ENCODE measurements at regions of chr2 and their contacts with region 1.

Region 1: DNA sequence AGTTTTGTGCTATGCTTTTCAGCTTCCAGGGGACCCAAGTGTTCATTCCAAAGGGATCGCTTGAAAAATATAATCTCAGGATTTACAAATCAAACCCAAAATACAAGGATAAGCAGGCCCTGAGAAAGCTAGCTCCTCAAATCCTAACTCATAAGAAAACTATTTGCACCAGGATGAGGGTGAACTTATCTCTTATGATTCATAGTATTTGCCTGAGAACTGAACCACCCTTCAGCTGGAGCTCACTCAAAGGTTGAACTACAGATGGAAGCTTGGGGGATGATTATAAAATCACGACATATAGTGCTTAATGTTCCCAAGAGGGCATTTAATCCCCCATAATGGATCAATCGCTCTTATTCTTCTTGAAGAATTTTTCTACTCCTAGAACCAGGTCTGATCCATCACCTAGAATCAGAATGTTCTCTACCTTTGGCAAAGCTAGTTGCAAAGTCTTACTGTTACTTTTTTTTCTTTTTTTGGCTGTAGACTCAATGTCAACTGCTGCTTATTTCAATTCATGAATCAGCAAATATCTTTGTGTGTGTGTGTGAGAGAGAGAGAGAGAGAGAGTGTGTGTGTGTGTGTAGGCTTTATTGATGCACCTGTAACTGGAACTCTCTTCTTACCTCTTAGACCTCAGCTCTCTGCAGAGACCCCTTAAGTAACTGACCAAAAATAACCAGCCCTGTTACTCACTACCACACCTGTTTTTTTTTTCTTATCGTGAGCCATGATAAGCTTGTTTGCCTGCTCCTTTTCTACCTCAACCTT is 44.8 kb downstream of the ARL4C start:
- DNase-seq: peak; percentile 34 to 63
- ATAC-seq: peak; percentile 71 to 85
- H3K4me3 ChIP-seq: no peak overlapping the region
- H3K27ac ChIP-seq: peak overlapping the region; percentile 50 to 70
- H3K4me1 ChIP-seq: peaks cover 33% of the 10 kb centered on the region
- CTCF ChIP-seq: no peak
- EP300 ChIP-seq: no peak
- POLR2A ChIP-seq: no peak
- RAD21 ChIP-seq: no peak

Region 2: DNA sequence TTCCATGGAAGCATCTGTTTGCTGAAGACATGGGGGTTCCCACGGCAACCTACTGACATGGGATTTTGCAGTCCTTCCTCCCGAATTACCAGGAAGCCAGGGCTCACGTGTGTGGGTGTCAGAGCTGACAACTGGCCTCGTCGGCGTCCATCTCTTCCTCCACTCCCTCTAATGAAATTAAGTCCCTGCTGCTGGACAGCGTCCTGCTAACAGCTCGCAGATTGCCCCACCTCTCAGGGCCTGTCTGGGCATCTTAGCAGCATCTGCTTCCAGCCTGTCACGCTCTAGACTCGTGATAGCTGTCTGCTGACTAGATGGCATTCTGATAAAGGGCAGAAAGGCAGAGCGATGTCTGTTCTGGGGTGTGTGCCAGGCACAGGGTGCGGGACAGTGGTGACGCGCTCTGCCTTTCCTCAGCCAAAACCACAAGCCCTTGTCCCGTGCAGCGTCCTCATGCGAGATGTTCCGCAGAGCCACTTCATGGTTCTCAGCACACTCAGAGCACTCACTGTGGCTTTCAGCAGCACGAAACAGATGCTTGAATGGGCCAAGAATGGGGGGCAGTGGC is 116.3 kb before region 1 on chr2:
- CTCF ChIA-PET with region 1: no interaction called
- POLR2A ChIA-PET with region 1: no interaction called
- DNase-seq: peak in 1 of 2 experiments; percentile 21
- ATAC-seq: peak in 1 of 2 experiments; percentile 21; a peak in 2 of 6 replicates
- H3K4me3 ChIP-seq: no peak overlapping the region
- H3K27ac ChIP-seq: peak overlapping the region in 1 of 2 experiments; percentile 67; a peak in 3 of 6 replicates
- H3K4me1 ChIP-seq: peaks cover 18% of the 10 kb centered on the region
- CTCF ChIP-seq: no peak
- EP300 ChIP-seq: no peak
- POLR2A ChIP-seq: no peak
- RAD21 ChIP-seq: no peak

Region 3: DNA sequence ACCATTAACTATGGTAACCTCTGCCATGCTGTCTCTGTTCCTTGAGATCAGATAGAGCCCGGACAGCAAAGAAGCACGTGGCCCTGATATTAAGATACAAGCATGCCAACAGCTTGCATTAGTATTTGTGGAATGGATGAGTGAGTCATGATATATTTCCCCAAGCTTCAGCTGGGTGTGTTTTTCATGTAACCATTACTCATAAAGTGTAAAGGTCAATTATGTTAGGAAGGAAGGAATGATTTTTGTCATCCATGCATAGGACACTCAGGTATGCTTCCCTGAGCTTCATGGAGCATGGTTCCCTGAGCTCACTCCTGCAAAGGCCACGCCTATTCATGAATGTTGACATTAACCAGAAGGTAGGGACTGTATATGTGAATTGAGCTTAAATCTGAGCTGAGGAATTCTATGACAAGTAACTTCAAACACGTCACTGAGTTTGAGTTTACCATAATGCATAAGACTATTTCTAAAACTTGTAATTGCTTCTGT is 29.7 kb before region 1 on chr2:
- CTCF ChIA-PET with region 1: interaction called, 3 read pairs
- POLR2A ChIA-PET with region 1: interaction called, 13 read pairs
- DNase-seq: peak; percentile 85 to 92
- ATAC-seq: peak; percentile 93
- H3K4me3 ChIP-seq: no peak overlapping the region
- H3K27ac ChIP-seq: peak overlapping the region; percentile 78 to 92
- H3K4me1 ChIP-seq: peaks cover 49% of the 10 kb centered on the region
- CTCF ChIP-seq: no peak
- EP300 ChIP-seq: peak; percentile 62 to 76; a peak in 2 of 5 replicates
- POLR2A ChIP-seq: no peak
- RAD21 ChIP-seq: peak in 1 of 2 experiments; percentile 44; a peak in 2 of 5 replicates

Region 4: GRCh38 chr2:234587341-234588053 is 135.5 kb after region 1 on chr2:
- CTCF ChIA-PET with region 1: no interaction called
- POLR2A ChIA-PET with region 1: no interaction called
- DNase-seq: no peak
- ATAC-seq: no peak
- H3K4me3 ChIP-seq: no peak overlapping the region
- H3K27ac ChIP-seq: no peak overlapping the region
- H3K4me1 ChIP-seq: no peaks in the 10 kb centered on the region
- CTCF ChIP-seq: no peak
- EP300 ChIP-seq: no peak
- POLR2A ChIP-seq: no peak
- RAD21 ChIP-seq: no peak

Measured in A549 (cell line).